CD4-positive, alpha-beta T cell (primary cell): ENCODE measurements at regions of chr2 and their contacts with region 1.

Region 1: GRCh38 chr2:393711-394696 is 106.1 kb upstream of the ALKAL2 start:
- DNase-seq: peak; percentile 39 to 82 (median 58)
- ATAC-seq: peak; percentile 84
- H3K4me3 ChIP-seq: peak overlapping the region; percentile 52
- H3K4me3 Mint-ChIP-seq: peak overlapping the region; percentile 84
- H3K27ac ChIP-seq: peak overlapping the region; percentile 62 to 75
- H3K27ac Mint-ChIP-seq: peak overlapping the region; percentile 93
- H3K4me1 ChIP-seq: peaks cover 24% of the 10 kb centered on the region
- H3K4me1 Mint-ChIP-seq: peaks cover 11% of the 10 kb centered on the region
- H3K27me3 ChIP-seq: no peaks in the 10 kb centered on the region
- H3K27me3 Mint-ChIP-seq: no peaks in the 10 kb centered on the region
- CTCF ChIP-seq: no peak

Region 2: GRCh38 chr2:437762-438393 is 43.9 kb after region 1 on chr2:
- CTCF ChIA-PET with region 1: no interaction called
- POLR2A ChIA-PET with region 1: interaction called, 17 read pairs
- intact Hi-C with region 1: loop called (anchors 1 to 5 kb)
- DNase-seq: peak; percentile 49 to 91 (median 65)
- ATAC-seq: peak; percentile 100
- H3K4me3 ChIP-seq: peak overlapping the region; percentile 47
- H3K4me3 Mint-ChIP-seq: peak overlapping the region; percentile 85
- H3K27ac ChIP-seq: peak overlapping the region; percentile 64
- H3K27ac Mint-ChIP-seq: peak overlapping the region; percentile 94
- H3K4me1 ChIP-seq: peaks cover 24% of the 10 kb centered on the region
- H3K4me1 Mint-ChIP-seq: peaks cover 22% of the 10 kb centered on the region
- H3K27me3 ChIP-seq: no peaks in the 10 kb centered on the region
- H3K27me3 Mint-ChIP-seq: no peaks in the 10 kb centered on the region
- CTCF ChIP-seq: no peak

Region 3: DNA sequence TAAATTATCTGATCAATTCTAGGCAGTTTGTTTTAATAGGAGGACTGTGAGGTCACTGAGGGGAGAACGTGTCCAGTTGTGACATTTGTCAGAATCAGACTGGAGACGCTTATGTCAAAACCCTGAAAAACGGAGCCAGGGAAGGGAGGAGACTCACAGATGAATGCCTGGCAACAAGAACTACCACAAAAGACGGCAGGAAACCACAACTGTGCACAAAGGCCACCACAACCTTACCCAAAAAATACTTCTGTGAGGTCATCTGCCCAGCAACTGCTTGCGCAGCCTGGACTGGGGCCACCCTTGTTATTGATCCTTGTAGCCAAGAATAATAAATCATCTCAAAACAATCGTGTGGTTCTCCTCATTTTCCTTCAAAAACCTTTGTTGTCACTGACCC is 66.9 kb after region 1 on chr2:
- CTCF ChIA-PET with region 1: no interaction called
- POLR2A ChIA-PET with region 1: no interaction called
- intact Hi-C with region 1: loop called in 1 of 2 experiments (anchors 2 kb)
- DNase-seq: peak in 13 of 14 experiments; percentile 24 to 87 (median 43)
- ATAC-seq: peak; percentile 84
- H3K4me3 ChIP-seq: no peak overlapping the region
- H3K4me3 Mint-ChIP-seq: peak overlapping the region; percentile 72
- H3K27ac ChIP-seq: no peak overlapping the region
- H3K27ac Mint-ChIP-seq: peak overlapping the region; percentile 40
- H3K4me1 ChIP-seq: peaks cover 21% of the 10 kb centered on the region
- H3K4me1 Mint-ChIP-seq: peaks cover 24% of the 10 kb centered on the region
- H3K27me3 ChIP-seq: peaks cover 16 to 59% of the 10 kb centered on the region in 2 experiments
- H3K27me3 Mint-ChIP-seq: peaks cover 90% of the 10 kb centered on the region
- CTCF ChIP-seq: no peak